Calu3 (cell line): ENCODE measurements at regions of chr12 and their contacts with region 1.

Region 1: GRCh38 chr12:401235-402028 is at the start of gene CCDC77:
- DNase-seq: peak; percentile 93
- H3K4me3 Mint-ChIP-seq: no peak within 1 kb of the TSS
- H3K27ac Mint-ChIP-seq: no peak within 1 kb of the TSS
- H3K4me1 Mint-ChIP-seq: no peaks in the 10 kb centered on the region
- H3K27me3 Mint-ChIP-seq: no peaks in the 10 kb centered on the region
- CTCF ChIP-seq: no peak
- total RNA-seq, gene CCDC77: 12.5 and 16.8 TPM in 2 replicates

Region 2: GRCh38 chr12:356276-356988 is 45.0 kb before region 1 on chr12:
- CTCF ChIA-PET with region 1: no interaction called
- intact Hi-C with region 1: no loop called
- DNase-seq: no peak
- H3K4me3 Mint-ChIP-seq: no peak overlapping the region
- H3K27ac Mint-ChIP-seq: no peak overlapping the region
- H3K4me1 Mint-ChIP-seq: no peaks in the 10 kb centered on the region
- H3K27me3 Mint-ChIP-seq: no peaks in the 10 kb centered on the region
- CTCF ChIP-seq: no peak

Region 3: GRCh38 chr12:389139-390096 is 12.0 kb before region 1 on chr12 and contains the start of gene KDM5A:
- CTCF ChIA-PET with region 1: interaction called, 11 read pairs
- intact Hi-C with region 1: no loop called
- DNase-seq: peak; percentile 89
- H3K4me3 Mint-ChIP-seq: peak within 1 kb of the TSS; percentile 73
- H3K27ac Mint-ChIP-seq: peak within 1 kb of the TSS; percentile 90
- H3K4me1 Mint-ChIP-seq: peaks cover 10% of the 10 kb centered on the region
- H3K27me3 Mint-ChIP-seq: no peaks in the 10 kb centered on the region
- CTCF ChIP-seq: no peak
- total RNA-seq, gene KDM5A: 60.7 and 63.6 TPM in 2 replicates